CD8-positive, alpha-beta T cell (primary cell): ENCODE measurements at regions of chr10 and their contacts with region 1.

Region 1: GRCh38 chr10:3785257-3785850 is 345 bp upstream of the KLF6 start:
- DNase-seq: peak; percentile 99 to 100 (median 99)
- ATAC-seq: peak; percentile 78
- H3K4me3 ChIP-seq: peak overlapping the region; percentile 78 to 80
- H3K4me3 Mint-ChIP-seq: peak overlapping the region; percentile 97
- H3K27ac ChIP-seq: peak overlapping the region; percentile 99
- H3K27ac Mint-ChIP-seq: peak overlapping the region; percentile 97
- H3K4me1 ChIP-seq: peaks cover 29% of the 10 kb centered on the region
- H3K4me1 Mint-ChIP-seq: peaks cover 36% of the 10 kb centered on the region
- H3K27me3 ChIP-seq: no peaks in the 10 kb centered on the region
- H3K27me3 Mint-ChIP-seq: no peaks in the 10 kb centered on the region
- CTCF ChIP-seq: no peak

Region 2: GRCh38 chr10:3668276-3668965 is 116.9 kb before region 1 on chr10:
- CTCF ChIA-PET with region 1: no interaction called
- POLR2A ChIA-PET with region 1: interaction called, 5 read pairs
- intact Hi-C with region 1: loop called in 1 of 2 experiments (anchors 2 kb)
- DNase-seq: peak; percentile 40 to 88 (median 66)
- ATAC-seq: peak; percentile 94
- H3K4me3 ChIP-seq: peak overlapping the region; percentile 43 to 64
- H3K4me3 Mint-ChIP-seq: peak overlapping the region; percentile 88
- H3K27ac ChIP-seq: peak overlapping the region; percentile 39 to 78
- H3K27ac Mint-ChIP-seq: peak overlapping the region; percentile 94
- H3K4me1 ChIP-seq: peaks cover 33% of the 10 kb centered on the region
- H3K4me1 Mint-ChIP-seq: peaks cover 43% of the 10 kb centered on the region
- H3K27me3 ChIP-seq: no peaks in the 10 kb centered on the region
- H3K27me3 Mint-ChIP-seq: no peaks in the 10 kb centered on the region
- CTCF ChIP-seq: no peak

Region 3: GRCh38 chr10:3811291-3811870 is 26.0 kb after region 1 on chr10:
- CTCF ChIA-PET with region 1: interaction called, 5 read pairs
- POLR2A ChIA-PET with region 1: interaction called, 229 read pairs
- intact Hi-C with region 1: no loop called
- DNase-seq: peak in 4 of 9 experiments; percentile 27 to 78 (median 50)
- ATAC-seq: peak; percentile 34
- H3K4me3 ChIP-seq: peak overlapping the region in 1 of 2 experiments; percentile 15
- H3K4me3 Mint-ChIP-seq: peak overlapping the region; percentile 68
- H3K27ac ChIP-seq: peak overlapping the region; percentile 75 to 98
- H3K27ac Mint-ChIP-seq: peak overlapping the region; percentile 90
- H3K4me1 ChIP-seq: peaks cover 56% of the 10 kb centered on the region
- H3K4me1 Mint-ChIP-seq: peaks cover 62% of the 10 kb centered on the region
- H3K27me3 ChIP-seq: no peaks in the 10 kb centered on the region
- H3K27me3 Mint-ChIP-seq: no peaks in the 10 kb centered on the region
- CTCF ChIP-seq: no peak

Region 4: DNA sequence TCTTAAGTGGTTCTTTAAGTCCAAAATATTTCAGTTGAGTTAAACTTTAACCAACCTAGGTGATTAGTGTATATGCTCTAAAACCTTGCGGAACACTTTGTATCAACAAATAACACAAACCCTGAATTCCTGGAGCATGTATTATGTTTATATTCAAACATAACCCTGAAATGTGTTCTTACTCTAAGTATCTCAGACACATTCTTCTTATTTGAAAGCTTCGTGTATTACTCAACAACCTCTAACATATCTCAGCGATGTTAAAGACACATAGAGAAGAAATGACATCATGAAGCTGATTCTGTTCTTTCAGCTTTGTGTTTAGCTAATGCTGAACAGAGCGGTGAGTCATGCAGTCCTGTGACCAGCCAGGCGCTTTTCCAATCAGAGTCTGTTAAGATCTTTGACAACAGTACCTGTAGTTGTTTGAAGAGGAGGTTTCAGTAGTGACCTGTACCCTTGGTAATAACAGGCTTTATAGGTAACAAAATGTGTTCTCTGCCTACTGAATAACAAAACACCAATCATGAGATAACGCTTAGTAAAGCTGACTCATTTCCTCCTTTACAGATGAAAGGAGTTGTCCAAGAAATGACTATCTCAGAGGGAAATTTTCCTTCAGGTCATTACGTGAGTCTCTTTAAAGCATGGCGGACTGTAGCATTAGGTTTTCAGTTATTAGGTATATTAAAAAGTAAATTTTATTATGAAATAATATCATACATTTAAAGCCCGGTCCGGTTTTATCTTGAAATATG is 67.0 kb after region 1 on chr10:
- CTCF ChIA-PET with region 1: no interaction called
- POLR2A ChIA-PET with region 1: interaction called, 5 read pairs
- intact Hi-C with region 1: loop called (anchors 5 kb)
- DNase-seq: peak in 7 of 9 experiments; percentile 21 to 85 (median 56)
- ATAC-seq: peak; percentile 86
- H3K4me3 ChIP-seq: no peak overlapping the region
- H3K4me3 Mint-ChIP-seq: no peak overlapping the region
- H3K27ac ChIP-seq: peak overlapping the region in 1 of 2 experiments; percentile 60
- H3K27ac Mint-ChIP-seq: peak overlapping the region; percentile 80
- H3K4me1 ChIP-seq: no peaks in the 10 kb centered on the region
- H3K4me1 Mint-ChIP-seq: peaks cover 18% of the 10 kb centered on the region
- H3K27me3 ChIP-seq: no peaks in the 10 kb centered on the region
- H3K27me3 Mint-ChIP-seq: no peaks in the 10 kb centered on the region
- CTCF ChIP-seq: no peak

Region 5: GRCh38 chr10:3948843-3949242 is 163.5 kb after region 1 on chr10:
- CTCF ChIA-PET with region 1: interaction called, 3 read pairs
- POLR2A ChIA-PET with region 1: interaction called, 38 read pairs
- intact Hi-C with region 1: loop called in 1 of 2 experiments (anchors 1 kb)
- DNase-seq: peak; percentile 55 to 93 (median 83)
- ATAC-seq: peak; percentile 82
- H3K4me3 ChIP-seq: no peak overlapping the region
- H3K4me3 Mint-ChIP-seq: peak overlapping the region; percentile 49
- H3K27ac ChIP-seq: peak overlapping the region in 1 of 2 experiments; percentile 72
- H3K27ac Mint-ChIP-seq: peak overlapping the region; percentile 86
- H3K4me1 ChIP-seq: peaks cover 52% of the 10 kb centered on the region
- H3K4me1 Mint-ChIP-seq: peaks cover 55% of the 10 kb centered on the region
- H3K27me3 ChIP-seq: no peaks in the 10 kb centered on the region
- H3K27me3 Mint-ChIP-seq: no peaks in the 10 kb centered on the region
- CTCF ChIP-seq: no peak